ENCODE measurements at regions of chrX and their contacts with region 1.

Region 1: GRCh38 chrX:17374619-17375366 is at the start of gene NHS:
- DNase-seq: peak; percentile 59 to 67
- H3K4me3 ChIP-seq: peak within 1 kb of the TSS; percentile 42
- H3K4me3 Mint-ChIP-seq: peak within 1 kb of the TSS; percentile 77
- H3K27ac Mint-ChIP-seq: peak within 1 kb of the TSS; percentile 35
- H3K4me1 ChIP-seq: no peaks in the 10 kb centered on the region
- H3K4me1 Mint-ChIP-seq: no peaks in the 10 kb centered on the region
- H3K27me3 ChIP-seq: no peaks in the 10 kb centered on the region; the same call in 1 of the 2 replicates
- H3K27me3 Mint-ChIP-seq: peaks cover 6% of the 10 kb centered on the region
- CTCF ChIP-seq: peak; percentile 35 to 43
- total RNA-seq, gene NHS: 2.2 and 2.5 TPM in 2 replicates

Region 2: DNA sequence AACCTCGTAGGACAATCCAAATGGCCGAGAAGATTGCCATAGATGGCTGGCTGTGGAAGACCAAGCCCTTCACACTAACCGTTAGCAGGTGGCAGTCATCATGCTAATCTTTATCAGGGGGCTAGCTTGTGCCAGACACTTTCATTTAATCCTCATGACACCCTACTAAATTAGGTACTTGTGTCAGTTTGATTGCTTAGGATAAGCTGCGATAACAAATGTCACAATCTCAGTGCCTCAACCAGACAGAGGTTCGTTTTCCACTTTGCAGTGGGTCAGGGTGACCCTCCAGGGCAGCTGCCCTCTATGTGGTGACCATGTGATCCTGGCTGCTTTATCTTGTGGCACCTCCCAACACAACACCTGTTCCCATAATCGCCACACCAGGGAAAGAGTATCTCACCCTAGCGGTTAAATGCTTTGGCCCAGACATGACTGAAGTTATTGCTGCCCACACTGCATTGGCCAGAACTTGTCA is 367.5 kb before region 1 on chrX:
- CTCF ChIA-PET with region 1: no interaction called
- POLR2A ChIA-PET with region 1: no interaction called
- intact Hi-C with region 1: no loop called
- DNase-seq: peak; percentile 1 to 29
- H3K4me3 ChIP-seq: no peak overlapping the region
- H3K4me3 Mint-ChIP-seq: no peak overlapping the region
- H3K27ac Mint-ChIP-seq: no peak overlapping the region
- H3K4me1 ChIP-seq: no peaks in the 10 kb centered on the region
- H3K4me1 Mint-ChIP-seq: no peaks in the 10 kb centered on the region
- H3K27me3 ChIP-seq: no peaks in the 10 kb centered on the region; the same call in 1 of the 2 replicates
- H3K27me3 Mint-ChIP-seq: peaks cover 3% of the 10 kb centered on the region
- CTCF ChIP-seq: peak in 1 of 2 experiments; percentile 33

Region 3: GRCh38 chrX:17425136-17425535 is 50.3 kb after region 1 on chrX:
- CTCF ChIA-PET with region 1: no interaction called
- POLR2A ChIA-PET with region 1: no interaction called
- intact Hi-C with region 1: no loop called
- DNase-seq: no peak
- H3K4me3 ChIP-seq: no peak overlapping the region
- H3K4me3 Mint-ChIP-seq: no peak overlapping the region
- H3K27ac Mint-ChIP-seq: no peak overlapping the region
- H3K4me1 ChIP-seq: no peaks in the 10 kb centered on the region
- H3K4me1 Mint-ChIP-seq: no peaks in the 10 kb centered on the region
- H3K27me3 ChIP-seq: no peaks in the 10 kb centered on the region
- H3K27me3 Mint-ChIP-seq: no peaks in the 10 kb centered on the region
- CTCF ChIP-seq: no peak

Region 4: DNA sequence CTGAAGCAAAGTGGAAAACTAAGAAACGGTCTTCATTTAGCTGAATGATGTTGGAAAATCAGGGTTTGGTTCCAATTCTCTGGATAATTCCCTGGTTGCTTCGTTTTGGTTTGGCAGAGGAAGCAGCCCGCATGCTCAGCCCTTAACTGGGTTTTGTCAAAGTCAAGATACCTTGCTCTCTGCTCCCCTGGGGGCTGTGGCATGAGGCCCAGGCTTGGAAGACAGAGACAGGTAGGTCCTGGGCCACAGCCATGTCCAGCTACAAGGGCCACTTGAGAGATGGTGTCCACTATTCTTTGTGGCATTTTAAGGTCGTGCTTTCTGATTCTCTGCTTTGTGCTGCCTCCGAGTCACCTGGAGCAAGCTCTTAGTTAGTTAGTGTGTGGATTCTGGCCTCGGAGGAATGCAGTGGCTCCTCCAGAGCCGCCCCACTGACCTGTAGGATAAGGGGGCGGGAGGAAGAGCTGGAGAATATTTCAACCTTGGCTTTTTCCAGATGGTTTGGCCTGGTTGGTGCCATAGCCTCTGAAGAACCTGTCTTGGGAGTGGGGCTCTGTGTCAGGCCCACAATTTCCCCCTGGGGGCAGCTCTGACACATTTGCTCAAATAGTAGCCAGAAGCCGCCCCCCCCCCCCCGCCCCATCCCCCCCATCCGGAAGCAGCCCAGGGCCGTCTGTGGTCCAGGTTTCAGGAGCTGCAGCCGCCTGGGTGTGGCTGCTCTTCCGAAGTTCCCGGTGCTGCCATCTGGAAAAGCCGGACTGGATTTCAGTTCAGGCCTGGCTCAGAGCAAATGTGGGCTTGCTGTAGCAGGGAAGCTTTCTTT is 147.3 kb after region 1 on chrX:
- CTCF ChIA-PET with region 1: interaction called, 6 read pairs
- POLR2A ChIA-PET with region 1: no interaction called
- intact Hi-C with region 1: loop called (anchors 1 kb)
- DNase-seq: peak; percentile 17 to 43
- H3K4me3 ChIP-seq: no peak overlapping the region
- H3K4me3 Mint-ChIP-seq: no peak overlapping the region
- H3K27ac Mint-ChIP-seq: no peak overlapping the region
- H3K4me1 ChIP-seq: no peaks in the 10 kb centered on the region
- H3K4me1 Mint-ChIP-seq: peaks cover under 1% of the 10 kb centered on the region
- H3K27me3 ChIP-seq: no peaks in the 10 kb centered on the region
- H3K27me3 Mint-ChIP-seq: no peaks in the 10 kb centered on the region
- CTCF ChIP-seq: no peak

Region 5: GRCh38 chrX:18160369-18160768 is 785.6 kb after region 1 on chrX:
- CTCF ChIA-PET with region 1: no interaction called
- POLR2A ChIA-PET with region 1: no interaction called
- intact Hi-C with region 1: no loop called
- DNase-seq: no peak
- H3K4me3 ChIP-seq: no peak overlapping the region
- H3K4me3 Mint-ChIP-seq: no peak overlapping the region
- H3K27ac Mint-ChIP-seq: no peak overlapping the region
- H3K4me1 ChIP-seq: no peaks in the 10 kb centered on the region
- H3K4me1 Mint-ChIP-seq: no peaks in the 10 kb centered on the region
- H3K27me3 ChIP-seq: no peaks in the 10 kb centered on the region
- H3K27me3 Mint-ChIP-seq: peaks cover 8% of the 10 kb centered on the region
- CTCF ChIP-seq: no peak